ENCODE measurements at regions of chr3 and their contacts with region 1.

Region 1: GRCh38 chr3:152298393-152299242 is 29.9 kb downstream of the MBNL1 start:
- DNase-seq: peak in 8 of 9 experiments; percentile 34 to 91 (median 60)
- ATAC-seq: peak; percentile 77
- H3K4me3 ChIP-seq: peak overlapping the region; percentile 4 to 16
- H3K4me3 Mint-ChIP-seq: peak overlapping the region; percentile 78
- H3K27ac ChIP-seq: peak overlapping the region; percentile 38 to 73
- H3K27ac Mint-ChIP-seq: peak overlapping the region; percentile 92
- H3K4me1 ChIP-seq: peaks cover 87% of the 10 kb centered on the region
- H3K4me1 Mint-ChIP-seq: peaks cover 80% of the 10 kb centered on the region
- H3K27me3 ChIP-seq: no peaks in the 10 kb centered on the region
- H3K27me3 Mint-ChIP-seq: no peaks in the 10 kb centered on the region
- CTCF ChIP-seq: no peak

Region 2: DNA sequence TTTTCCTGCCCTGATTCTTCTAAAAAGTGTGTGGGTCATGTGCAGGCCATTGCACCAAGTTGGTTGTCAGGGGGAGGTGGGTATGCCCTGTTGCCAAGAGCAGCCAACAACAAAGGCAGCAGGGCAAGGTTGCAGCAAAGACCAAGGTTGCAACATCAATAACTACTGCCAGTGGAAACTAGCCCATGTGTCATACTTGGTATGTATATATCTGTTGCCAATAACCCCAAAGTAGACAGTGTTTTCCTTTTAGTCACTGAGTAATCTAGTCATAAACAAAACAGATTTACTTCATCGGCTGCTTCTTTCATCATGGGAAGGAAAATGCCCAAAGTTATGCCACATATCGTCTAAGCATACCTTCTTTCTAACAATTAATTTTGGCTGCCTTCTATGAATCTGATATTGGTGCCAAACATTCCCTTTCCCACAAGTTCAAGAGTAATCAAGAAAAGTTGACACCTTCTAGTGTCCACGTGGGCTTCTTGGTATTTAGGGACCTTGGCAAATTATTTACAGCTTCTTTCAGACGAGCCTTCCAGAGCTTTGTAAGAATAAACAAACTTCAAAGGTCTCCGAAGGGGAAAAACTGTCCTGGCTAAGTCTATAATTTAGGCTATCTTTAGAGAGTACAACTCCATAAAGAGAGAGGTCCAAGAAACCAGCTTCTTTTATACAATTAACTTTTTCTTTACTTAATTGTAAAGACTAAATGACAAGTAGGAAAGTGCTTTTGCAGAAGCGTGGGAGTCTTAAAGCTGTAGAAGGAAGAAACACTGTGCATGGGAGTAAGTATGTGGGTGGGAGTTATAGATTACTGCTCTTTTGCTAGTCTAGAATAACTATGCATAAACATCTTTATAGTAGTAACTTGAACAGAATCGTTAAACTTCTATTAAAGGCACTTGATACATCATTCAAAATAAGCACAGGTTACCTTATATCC is 39.9 kb before region 1 on chr3:
- CTCF ChIA-PET with region 1: no interaction called
- POLR2A ChIA-PET with region 1: interaction called, 3 read pairs
- intact Hi-C with region 1: loop called in 1 of 2 experiments (anchors 5 kb)
- DNase-seq: peak in 8 of 9 experiments; percentile 32 to 84 (median 67)
- ATAC-seq: peak; percentile 52
- H3K4me3 ChIP-seq: peak overlapping the region in 1 of 2 experiments; percentile 22
- H3K4me3 Mint-ChIP-seq: peak overlapping the region; percentile 72
- H3K27ac ChIP-seq: peak overlapping the region; percentile 49 to 78
- H3K27ac Mint-ChIP-seq: peak overlapping the region; percentile 98
- H3K4me1 ChIP-seq: peaks cover 80% of the 10 kb centered on the region
- H3K4me1 Mint-ChIP-seq: peaks cover 86% of the 10 kb centered on the region
- H3K27me3 ChIP-seq: no peaks in the 10 kb centered on the region
- H3K27me3 Mint-ChIP-seq: no peaks in the 10 kb centered on the region
- CTCF ChIP-seq: no peak

Region 3: GRCh38 chr3:152281133-152281713 is 17.4 kb before region 1 on chr3:
- CTCF ChIA-PET with region 1: interaction called, 3 read pairs
- POLR2A ChIA-PET with region 1: interaction called, 3 read pairs
- intact Hi-C with region 1: loop called in 1 of 2 experiments (anchors 1 kb)
- DNase-seq: peak in 1 of 9 experiments; percentile 41
- ATAC-seq: no peak
- H3K4me3 ChIP-seq: peak overlapping the region in 1 of 2 experiments; percentile 14
- H3K4me3 Mint-ChIP-seq: peak overlapping the region; percentile 63
- H3K27ac ChIP-seq: peak overlapping the region in 1 of 2 experiments; percentile 69
- H3K27ac Mint-ChIP-seq: peak overlapping the region; percentile 87
- H3K4me1 ChIP-seq: peaks cover 88% of the 10 kb centered on the region
- H3K4me1 Mint-ChIP-seq: peaks cover 84% of the 10 kb centered on the region
- H3K27me3 ChIP-seq: no peaks in the 10 kb centered on the region
- H3K27me3 Mint-ChIP-seq: no peaks in the 10 kb centered on the region
- CTCF ChIP-seq: no peak

Region 4: DNA sequence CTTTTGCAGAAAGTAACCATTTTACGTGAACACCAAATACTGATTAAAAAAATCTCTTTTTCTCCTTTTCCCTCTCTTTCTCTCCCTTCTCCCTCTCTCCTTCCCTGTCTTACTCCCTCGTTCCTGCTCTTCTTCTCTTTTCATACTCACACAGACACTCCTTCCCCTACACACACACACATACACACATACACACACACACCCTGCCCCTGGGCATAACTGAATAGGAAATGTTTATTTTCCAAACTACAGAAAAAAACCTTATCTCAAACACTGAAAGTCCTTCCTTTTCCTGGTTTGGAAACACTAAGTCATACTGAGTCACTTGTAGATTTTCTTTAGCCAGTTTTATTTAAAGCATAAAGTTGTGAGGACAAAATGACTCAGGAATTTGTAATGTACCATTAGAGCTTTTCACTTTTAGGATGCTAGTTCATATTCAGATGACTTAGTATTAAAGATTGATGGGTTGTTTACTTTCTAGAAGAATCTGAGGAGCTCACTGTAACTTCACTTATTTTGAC is 32.5 kb after region 1 on chr3:
- CTCF ChIA-PET with region 1: no interaction called
- POLR2A ChIA-PET with region 1: no interaction called
- intact Hi-C with region 1: loop called in 1 of 2 experiments (anchors 5 kb)
- DNase-seq: no peak
- ATAC-seq: no peak
- H3K4me3 ChIP-seq: no peak overlapping the region
- H3K4me3 Mint-ChIP-seq: peak overlapping the region; percentile 6
- H3K27ac ChIP-seq: no peak overlapping the region
- H3K27ac Mint-ChIP-seq: peak overlapping the region; percentile 77
- H3K4me1 ChIP-seq: peaks cover 74% of the 10 kb centered on the region
- H3K4me1 Mint-ChIP-seq: peaks cover 88% of the 10 kb centered on the region
- H3K27me3 ChIP-seq: no peaks in the 10 kb centered on the region
- H3K27me3 Mint-ChIP-seq: no peaks in the 10 kb centered on the region
- CTCF ChIP-seq: no peak

Region 5: DNA sequence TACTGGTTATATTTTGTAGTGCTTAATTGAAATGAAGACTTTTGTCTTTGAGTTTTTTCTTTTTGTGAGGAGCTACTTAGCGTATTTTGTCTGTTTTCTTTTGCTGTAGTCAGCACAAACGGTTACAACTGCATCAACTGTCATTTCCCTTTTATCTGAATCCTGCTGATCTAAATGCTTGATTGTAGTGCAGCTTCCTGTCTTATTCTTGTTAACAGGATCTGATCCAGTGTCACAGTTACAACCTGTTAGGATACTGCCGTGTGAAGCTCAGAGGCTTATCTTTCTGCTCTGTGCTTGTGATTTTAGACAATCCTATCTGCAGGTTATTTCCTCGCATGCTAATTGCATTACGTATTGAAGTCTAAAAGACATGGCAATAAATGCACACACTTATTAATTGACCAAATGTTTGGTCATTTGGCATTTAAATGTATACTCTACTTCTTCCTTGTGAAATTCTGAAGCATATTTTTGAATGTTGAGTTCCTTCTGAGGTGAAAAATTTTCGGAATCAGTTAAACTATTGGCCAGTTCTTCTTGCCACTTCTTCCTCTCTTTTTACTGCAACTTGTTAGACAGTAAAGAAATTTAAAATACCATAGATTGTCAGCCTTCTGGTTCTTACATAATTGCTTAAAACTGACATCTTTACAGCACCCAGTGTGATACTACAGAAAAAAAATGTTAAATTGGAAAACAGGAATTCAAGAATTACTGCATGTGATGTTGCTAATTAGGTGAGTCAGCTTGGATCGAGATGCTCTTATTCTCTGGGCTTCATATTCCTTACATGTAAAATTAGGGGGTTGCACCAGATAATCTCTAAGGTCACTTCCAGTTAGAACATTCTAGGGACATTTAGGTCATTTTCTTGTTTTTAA is 138.3 kb after region 1 on chr3:
- CTCF ChIA-PET with region 1: no interaction called
- POLR2A ChIA-PET with region 1: no interaction called
- intact Hi-C with region 1: loop called in 1 of 2 experiments (anchors 5 kb)
- DNase-seq: no peak
- ATAC-seq: no peak
- H3K4me3 ChIP-seq: no peak overlapping the region
- H3K4me3 Mint-ChIP-seq: peak overlapping the region; percentile 15
- H3K27ac ChIP-seq: peak overlapping the region in 1 of 2 experiments; percentile 33
- H3K27ac Mint-ChIP-seq: peak overlapping the region; percentile 87
- H3K4me1 ChIP-seq: peaks cover 35% of the 10 kb centered on the region
- H3K4me1 Mint-ChIP-seq: peaks cover 70% of the 10 kb centered on the region
- H3K27me3 ChIP-seq: no peaks in the 10 kb centered on the region
- H3K27me3 Mint-ChIP-seq: no peaks in the 10 kb centered on the region
- CTCF ChIP-seq: no peak

Region 6: GRCh38 chr3:152719264-152719663 is 420.6 kb after region 1 on chr3:
- CTCF ChIA-PET with region 1: no interaction called
- POLR2A ChIA-PET with region 1: no interaction called
- intact Hi-C with region 1: no loop called
- DNase-seq: no peak
- ATAC-seq: no peak
- H3K4me3 ChIP-seq: no peak overlapping the region
- H3K4me3 Mint-ChIP-seq: no peak overlapping the region
- H3K27ac ChIP-seq: no peak overlapping the region
- H3K27ac Mint-ChIP-seq: no peak overlapping the region
- H3K4me1 ChIP-seq: no peaks in the 10 kb centered on the region
- H3K4me1 Mint-ChIP-seq: no peaks in the 10 kb centered on the region
- H3K27me3 ChIP-seq: no peaks in the 10 kb centered on the region
- H3K27me3 Mint-ChIP-seq: no peaks in the 10 kb centered on the region
- CTCF ChIP-seq: no peak

Measured in CD8-positive, alpha-beta T cell (primary cell).